ENCODE measurements at regions of chr20 and their contacts with region 1.

Region 1: DNA sequence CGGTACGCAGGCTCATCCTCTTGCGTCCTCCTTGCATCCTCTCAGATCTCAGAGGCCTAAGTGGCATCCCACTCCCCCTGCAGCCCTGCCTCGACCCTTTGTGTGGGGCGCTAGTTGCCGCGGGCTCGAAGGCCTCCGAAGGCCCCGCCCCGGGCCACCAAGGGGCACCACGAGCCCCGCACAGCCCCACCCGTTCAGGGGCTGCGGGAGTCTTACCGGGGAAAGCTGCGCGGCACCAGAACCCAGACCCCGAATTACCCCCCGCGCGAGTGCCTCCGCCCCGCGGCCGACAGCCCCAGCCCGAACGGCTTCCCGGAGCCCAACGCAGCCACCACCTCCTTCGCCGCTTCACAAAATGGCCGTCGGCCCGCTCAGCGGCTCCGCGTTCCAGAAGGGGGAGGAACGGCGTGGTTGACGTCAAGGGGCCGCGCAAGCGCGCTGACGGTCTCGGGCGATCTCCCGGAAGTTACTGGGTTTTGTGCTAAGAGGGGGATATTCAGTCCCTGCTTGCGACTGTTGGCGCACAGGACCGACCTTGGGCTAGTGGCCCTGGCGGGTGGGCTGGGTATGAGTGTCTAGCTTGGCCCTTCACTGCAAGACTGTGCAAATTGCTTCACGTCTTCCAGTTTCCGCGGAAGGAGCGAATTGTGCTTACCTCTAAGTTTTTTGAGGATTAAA is at the starts of genes CPNE1 and RBM12:
- DNase-seq: peak; percentile 97

Region 2: GRCh38 chr20:35619196-35620095 is 45.2 kb before region 1 on chr20:
- CTCF ChIA-PET with region 1: interaction called, 4 read pairs
- POLR2A ChIA-PET with region 1: interaction called, 44 read pairs
- DNase-seq: peak; percentile 75

Region 3: DNA sequence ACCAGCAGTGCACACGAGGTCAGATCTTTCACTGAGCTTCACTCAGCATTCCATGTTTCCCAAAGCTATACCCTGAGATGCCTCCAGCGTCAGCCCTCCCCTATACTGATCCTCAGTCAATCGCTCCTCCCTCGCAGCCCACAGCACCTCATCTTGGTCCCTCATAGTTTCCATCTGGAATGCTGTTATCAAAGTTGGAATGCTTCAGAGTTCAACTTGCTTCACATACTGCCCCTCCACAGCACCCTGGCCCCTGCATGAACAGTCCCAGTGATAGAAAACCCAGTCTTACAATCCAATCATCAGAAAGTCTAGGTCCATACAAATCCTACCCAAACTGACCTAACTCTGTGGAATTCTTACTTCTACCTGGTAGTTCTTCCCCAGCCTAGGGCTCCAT is 29.0 kb before region 1 on chr20:
- CTCF ChIA-PET with region 1: no interaction called
- POLR2A ChIA-PET with region 1: no interaction called
- DNase-seq: no peak

Region 4: DNA sequence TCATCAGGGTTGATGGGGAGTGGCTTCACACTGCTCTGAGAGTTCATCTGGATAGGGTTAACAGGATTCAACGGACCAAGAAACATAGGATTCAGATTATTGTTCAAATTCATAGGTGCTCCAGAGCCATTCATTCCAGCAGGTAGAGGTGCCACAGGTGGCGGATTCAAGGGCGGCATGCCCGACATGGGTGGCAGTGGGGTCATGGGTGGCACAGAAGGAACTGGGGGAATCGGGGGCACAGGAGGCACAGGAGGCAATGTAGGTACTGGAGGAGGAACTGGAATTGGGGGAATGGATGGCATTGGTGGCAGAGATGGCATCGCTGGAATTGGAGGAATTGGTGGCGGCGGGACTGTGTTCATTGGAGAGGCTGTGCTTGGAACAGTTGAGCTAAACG is 10.3 kb before region 1 on chr20:
- CTCF ChIA-PET with region 1: no interaction called
- POLR2A ChIA-PET with region 1: interaction called, 12 read pairs
- DNase-seq: no peak

Measured in HEK293T (cell line).